ENCODE measurements at regions of chr2 and their contacts with region 1.

Region 1: GRCh38 chr2:149561309-149561926 is 26.2 kb downstream of the MMADHC start:
- DNase-seq: no peak
- H3K4me3 ChIP-seq: no peak overlapping the region
- H3K27ac ChIP-seq: no peak overlapping the region
- H3K4me1 ChIP-seq: no peaks in the 10 kb centered on the region
- H3K27me3 ChIP-seq: no peaks in the 10 kb centered on the region
- CTCF ChIP-seq: peak; percentile 90

Region 2: DNA sequence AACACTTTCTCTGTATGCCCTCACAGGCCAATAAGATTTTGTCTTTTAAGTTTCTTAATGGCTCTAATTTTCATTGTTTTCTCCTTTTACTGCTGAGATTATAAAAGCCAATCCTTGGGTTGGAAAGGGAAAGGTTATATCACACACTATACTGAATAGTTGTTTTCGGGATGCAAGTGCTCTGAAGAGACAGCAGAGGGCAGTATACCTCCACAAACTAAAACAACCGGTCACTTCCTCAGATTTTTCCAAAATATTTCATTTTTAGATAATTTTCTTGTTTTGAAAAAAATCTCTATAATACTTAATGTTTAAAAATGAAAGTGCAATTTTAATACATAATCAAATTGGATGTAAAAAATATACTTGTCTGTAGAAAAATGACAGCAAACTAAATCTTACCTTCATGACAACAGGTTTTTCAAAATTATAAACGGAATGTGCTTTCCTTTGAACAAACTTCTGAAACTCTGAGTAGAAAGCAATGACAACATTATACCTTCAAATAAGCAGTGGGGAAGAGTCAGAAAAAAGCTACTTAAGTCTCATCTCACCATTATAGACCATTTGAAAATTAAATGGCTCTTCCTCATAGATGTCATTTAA is 1623.6 kb before region 1 on chr2:
- CTCF ChIA-PET with region 1: no interaction called
- POLR2A ChIA-PET with region 1: no interaction called
- intact Hi-C with region 1: loop called (anchors 5 kb)
- DNase-seq: no peak
- H3K4me3 ChIP-seq: no peak overlapping the region
- H3K27ac ChIP-seq: no peak overlapping the region
- H3K4me1 ChIP-seq: no peaks in the 10 kb centered on the region
- H3K27me3 ChIP-seq: no peaks in the 10 kb centered on the region
- CTCF ChIP-seq: peak; percentile 82

Region 3: GRCh38 chr2:148989882-148990493 is 571.4 kb before region 1 on chr2:
- CTCF ChIA-PET with region 1: no interaction called
- POLR2A ChIA-PET with region 1: no interaction called
- intact Hi-C with region 1: loop called (anchors 1 kb)
- DNase-seq: peak; percentile 36 to 56
- H3K4me3 ChIP-seq: no peak overlapping the region
- H3K27ac ChIP-seq: no peak overlapping the region
- H3K4me1 ChIP-seq: no peaks in the 10 kb centered on the region
- H3K27me3 ChIP-seq: no peaks in the 10 kb centered on the region
- CTCF ChIP-seq: peak; percentile 73

Region 4: DNA sequence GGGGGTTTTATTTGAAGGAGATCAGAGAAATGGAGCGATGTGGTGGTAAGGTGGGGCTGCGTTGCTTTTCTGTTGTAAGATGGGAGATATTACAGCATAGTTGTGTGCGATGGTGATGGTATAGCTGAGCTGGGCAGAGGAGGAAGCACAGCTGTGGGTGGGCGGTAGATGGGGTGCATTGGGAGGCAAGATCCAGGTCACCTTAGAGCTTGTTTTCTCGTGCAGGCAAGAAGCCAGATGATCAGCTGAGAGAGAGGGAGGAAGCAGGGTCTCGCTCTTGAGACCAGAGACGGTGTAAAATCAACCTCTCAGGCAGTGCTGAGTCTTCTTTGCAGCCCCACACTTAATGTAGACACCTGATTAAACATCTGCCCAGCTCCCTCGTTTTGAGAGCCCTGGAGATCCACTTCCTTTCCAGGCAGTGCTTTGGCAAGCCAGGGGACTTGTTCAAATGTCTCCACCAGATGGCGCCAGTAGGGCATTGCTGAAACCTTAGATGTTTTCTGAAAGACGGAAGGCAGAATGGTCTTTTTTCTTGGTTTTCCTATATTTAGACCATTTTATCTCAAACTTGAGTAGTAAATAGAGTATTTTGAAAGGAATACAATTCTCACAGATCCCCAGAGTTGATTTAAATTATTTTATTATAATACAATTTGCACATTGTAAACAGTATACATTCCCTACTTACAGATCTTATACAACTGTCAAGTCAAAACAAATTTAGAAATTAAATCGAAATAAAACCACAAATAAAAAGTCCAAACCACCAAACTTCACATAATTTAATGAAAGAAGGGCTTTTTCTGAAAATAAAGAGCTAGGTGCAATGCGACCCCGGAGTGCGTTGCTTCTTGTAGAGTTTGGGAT is 544.1 kb before region 1 on chr2:
- CTCF ChIA-PET with region 1: interaction called, 4 read pairs
- POLR2A ChIA-PET with region 1: no interaction called
- intact Hi-C with region 1: loop called (anchors 1 kb)
- DNase-seq: peak; percentile 46 to 65
- H3K4me3 ChIP-seq: no peak overlapping the region
- H3K27ac ChIP-seq: no peak overlapping the region
- H3K4me1 ChIP-seq: no peaks in the 10 kb centered on the region; the same call in 1 of the 2 replicates
- H3K27me3 ChIP-seq: no peaks in the 10 kb centered on the region
- CTCF ChIP-seq: peak; percentile 83

Region 5: GRCh38 chr2:149160701-149161217 is 400.7 kb before region 1 on chr2:
- CTCF ChIA-PET with region 1: no interaction called
- POLR2A ChIA-PET with region 1: no interaction called
- intact Hi-C with region 1: loop called (anchors 10 kb)
- DNase-seq: no peak
- H3K4me3 ChIP-seq: no peak overlapping the region
- H3K27ac ChIP-seq: no peak overlapping the region
- H3K4me1 ChIP-seq: peaks cover 12% of the 10 kb centered on the region
- H3K27me3 ChIP-seq: no peaks in the 10 kb centered on the region
- CTCF ChIP-seq: no peak

Region 6: GRCh38 chr2:149313512-149313972 is 247.9 kb before region 1 on chr2:
- CTCF ChIA-PET with region 1: no interaction called
- POLR2A ChIA-PET with region 1: no interaction called
- intact Hi-C with region 1: loop called (anchors 5 kb)
- DNase-seq: peak in 1 of 2 experiments; percentile 5
- H3K4me3 ChIP-seq: no peak overlapping the region
- H3K27ac ChIP-seq: no peak overlapping the region
- H3K4me1 ChIP-seq: no peaks in the 10 kb centered on the region
- H3K27me3 ChIP-seq: no peaks in the 10 kb centered on the region
- CTCF ChIP-seq: peak; percentile 76

Region 7: DNA sequence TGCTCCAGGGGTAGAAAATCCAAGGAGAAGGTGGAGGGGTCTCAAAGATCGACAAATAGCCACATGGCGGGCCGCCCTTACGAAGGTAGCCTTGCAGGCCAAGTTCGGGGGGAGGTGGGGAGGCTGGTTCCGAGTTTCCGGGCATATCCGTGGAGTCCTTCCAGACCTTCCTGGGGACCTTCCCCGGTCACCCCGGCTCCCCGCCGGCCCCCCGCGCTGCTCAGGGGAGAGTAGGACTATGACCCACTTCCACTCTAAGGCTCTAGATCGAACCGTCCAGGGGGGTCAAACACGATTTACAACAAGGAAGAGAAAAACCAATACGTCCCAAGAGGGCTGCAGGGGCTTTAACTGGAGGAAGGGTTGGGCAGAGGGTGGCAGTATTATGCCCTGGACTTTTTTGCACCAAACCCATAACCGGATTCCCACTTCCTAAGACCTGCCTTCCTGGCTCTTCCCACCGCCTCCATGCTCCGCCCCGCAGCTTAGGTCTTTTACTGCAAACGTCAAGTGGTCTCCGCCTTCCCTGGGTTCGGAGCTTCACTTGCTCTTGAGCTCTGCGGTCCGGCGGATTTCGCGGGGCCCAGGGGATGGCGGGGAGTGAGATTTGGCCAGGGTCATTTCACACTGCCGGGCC is 231.8 kb before region 1 on chr2:
- CTCF ChIA-PET with region 1: no interaction called
- POLR2A ChIA-PET with region 1: no interaction called
- intact Hi-C with region 1: loop called (anchors 5 kb)
- DNase-seq: peak; percentile 36 to 52
- H3K4me3 ChIP-seq: peak overlapping the region; percentile 85
- H3K27ac ChIP-seq: 0 out of 2 replicates have a peak overlapping the region, but pooled peaks have one; percentile 16
- H3K4me1 ChIP-seq: peaks cover 6% of the 10 kb centered on the region; the same call in 1 of the 2 replicates
- H3K27me3 ChIP-seq: no peaks in the 10 kb centered on the region
- CTCF ChIP-seq: 0 out of 2 replicates have a peak, but pooled peaks have one; percentile 24

Region 8: DNA sequence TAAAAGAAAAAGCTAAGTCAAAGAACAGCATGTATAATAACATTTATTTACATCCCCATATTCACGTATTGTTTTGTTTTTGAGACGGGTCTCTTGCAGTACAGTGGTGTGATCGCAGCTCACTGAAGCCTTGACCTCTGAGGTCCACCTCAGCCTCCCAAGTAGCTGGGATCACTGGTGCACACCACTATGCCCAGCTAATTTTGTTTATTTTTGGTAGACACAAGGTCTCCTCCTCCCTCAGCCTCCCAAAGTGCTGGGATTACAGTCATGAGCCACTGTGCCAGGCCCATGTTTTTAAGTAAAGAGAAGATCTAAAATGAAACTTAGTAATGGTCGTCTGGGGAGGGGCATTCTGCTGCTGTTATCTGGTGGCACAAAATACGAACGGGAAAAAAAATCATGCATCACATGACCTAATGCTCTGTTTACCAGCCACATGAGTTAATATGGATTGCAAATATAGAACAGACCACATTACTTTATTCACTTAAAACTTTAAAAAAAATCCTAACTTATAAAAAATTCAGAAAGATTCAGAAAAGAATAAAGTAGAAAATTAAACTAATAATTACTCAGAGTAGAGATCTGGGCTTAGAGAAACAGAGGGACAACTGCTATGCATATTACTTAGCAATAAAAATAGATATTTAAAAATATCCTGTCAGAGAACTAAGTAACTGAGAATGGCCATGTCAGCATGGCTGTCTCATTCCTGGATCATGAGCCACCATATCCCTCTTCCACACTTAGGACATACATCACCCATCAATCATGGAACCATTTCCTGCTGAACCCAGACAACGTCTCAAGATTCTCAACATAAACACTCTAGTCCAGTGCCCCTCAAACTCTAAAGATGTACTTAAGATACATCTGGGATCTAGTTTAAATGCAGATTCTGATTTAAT is 18.8 kb after region 1 on chr2:
- CTCF ChIA-PET with region 1: no interaction called
- POLR2A ChIA-PET with region 1: no interaction called
- intact Hi-C with region 1: no loop called
- DNase-seq: no peak
- H3K4me3 ChIP-seq: no peak overlapping the region
- H3K27ac ChIP-seq: no peak overlapping the region
- H3K4me1 ChIP-seq: peaks cover 3% of the 10 kb centered on the region; the same call in 1 of the 2 replicates
- H3K27me3 ChIP-seq: no peaks in the 10 kb centered on the region
- CTCF ChIP-seq: no peak

Region 9: DNA sequence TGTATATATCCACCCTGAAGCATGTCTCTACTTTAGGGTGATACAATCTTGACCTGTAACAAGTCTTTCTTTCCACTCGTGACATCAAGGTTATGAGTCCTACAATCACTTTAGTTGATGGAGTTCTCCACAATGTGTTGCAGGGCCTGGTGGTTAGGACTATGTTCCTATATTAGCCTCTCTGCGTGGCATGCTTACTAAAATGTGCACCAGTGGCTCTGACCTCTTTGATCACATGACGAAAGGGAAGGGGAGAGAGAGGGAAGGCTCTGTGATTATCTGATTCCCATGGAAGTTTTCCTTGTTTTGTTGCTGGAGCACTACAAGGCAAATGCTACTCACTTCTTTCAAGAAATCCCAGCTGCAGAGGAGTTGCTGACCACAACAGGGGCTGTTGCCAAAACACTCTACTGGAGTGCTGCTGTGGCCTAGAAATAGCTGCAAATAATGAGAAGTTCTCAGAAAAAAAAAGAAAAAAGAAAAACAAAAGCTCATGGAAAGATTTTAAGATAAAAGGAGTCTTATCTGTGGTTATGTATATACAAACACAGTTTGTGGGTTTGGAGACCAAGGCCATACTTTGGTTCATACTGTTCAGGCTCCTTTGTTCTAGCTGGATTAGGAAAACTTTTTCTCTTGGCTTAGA is 299.0 kb after region 1 on chr2:
- CTCF ChIA-PET with region 1: no interaction called
- POLR2A ChIA-PET with region 1: no interaction called
- intact Hi-C with region 1: no loop called
- DNase-seq: peak in 1 of 2 experiments; percentile 33
- H3K4me3 ChIP-seq: no peak overlapping the region
- H3K27ac ChIP-seq: no peak overlapping the region
- H3K4me1 ChIP-seq: peaks cover 10% of the 10 kb centered on the region
- H3K27me3 ChIP-seq: no peaks in the 10 kb centered on the region
- CTCF ChIP-seq: no peak

Region 10: GRCh38 chr2:150548527-150548926 is 987.1 kb after region 1 on chr2:
- CTCF ChIA-PET with region 1: no interaction called
- POLR2A ChIA-PET with region 1: no interaction called
- intact Hi-C with region 1: no loop called
- DNase-seq: no peak
- H3K4me3 ChIP-seq: no peak overlapping the region
- H3K27ac ChIP-seq: no peak overlapping the region
- H3K4me1 ChIP-seq: no peaks in the 10 kb centered on the region
- H3K27me3 ChIP-seq: no peaks in the 10 kb centered on the region
- CTCF ChIP-seq: peak; percentile 39; the same call in 1 of the 2 replicates